MCF 10A (cell line): ENCODE measurements at regions of chr1 and their contacts with region 1.

Region 1: GRCh38 chr1:224052772-224053171 is 61.1 kb upstream of the FBXO28 start:
- DNase-seq: peak; percentile 39
- H3K4me3 Mint-ChIP-seq: no peak overlapping the region
- H3K27ac Mint-ChIP-seq: no peak overlapping the region
- H3K4me1 Mint-ChIP-seq: peaks cover 10% of the 10 kb centered on the region
- H3K27me3 Mint-ChIP-seq: no peaks in the 10 kb centered on the region
- CTCF ChIP-seq: no peak

Region 2: GRCh38 chr1:223390618-223391017 is 662.2 kb before region 1 on chr1:
- CTCF ChIA-PET with region 1: no interaction called
- POLR2A ChIA-PET with region 1: no interaction called
- intact Hi-C with region 1: no loop called
- DNase-seq: no peak
- H3K4me3 Mint-ChIP-seq: no peak overlapping the region
- H3K27ac Mint-ChIP-seq: no peak overlapping the region
- H3K4me1 Mint-ChIP-seq: no peaks in the 10 kb centered on the region
- H3K27me3 Mint-ChIP-seq: peaks cover 16% of the 10 kb centered on the region
- CTCF ChIP-seq: no peak

Region 3: DNA sequence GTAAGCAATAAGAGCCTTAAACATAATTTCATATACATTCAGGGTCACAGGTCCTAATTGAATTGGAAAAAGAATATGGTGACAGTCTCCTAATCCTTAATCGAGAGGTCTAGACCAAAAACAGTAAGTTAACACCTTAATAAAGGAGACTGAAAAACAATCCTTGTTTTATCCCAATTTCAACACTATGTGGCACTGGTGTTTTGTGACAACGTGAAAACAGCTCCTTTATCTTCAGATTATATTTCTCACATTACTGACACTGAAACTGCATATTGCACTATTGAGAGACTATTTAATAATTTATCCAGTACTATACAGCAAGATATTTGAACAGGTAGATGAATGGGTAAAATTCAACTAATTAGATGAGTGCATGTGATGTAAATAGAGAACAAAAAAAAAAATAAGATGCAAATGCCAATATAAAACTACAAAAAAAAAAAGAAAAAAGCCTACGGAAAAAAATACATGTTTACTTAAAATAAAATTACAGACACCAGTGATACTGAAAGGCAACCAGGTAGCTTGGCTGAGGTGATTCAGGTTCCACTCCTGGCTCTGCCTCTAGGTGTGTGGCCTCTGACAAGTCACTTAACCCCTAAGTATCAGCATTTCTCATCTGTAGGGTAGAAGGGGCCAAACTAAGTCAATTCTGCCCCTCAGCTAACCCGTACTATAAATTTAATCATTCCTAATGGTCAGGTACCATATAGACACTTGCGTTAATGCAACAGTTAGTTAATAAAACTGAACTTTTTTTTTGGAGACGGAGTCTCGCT is 240.9 kb before region 1 on chr1:
- CTCF ChIA-PET with region 1: interaction called, 27 read pairs
- POLR2A ChIA-PET with region 1: interaction called, 4 read pairs
- intact Hi-C with region 1: loop called (anchors 1 kb)
- DNase-seq: peak; percentile 74
- H3K4me3 Mint-ChIP-seq: no peak overlapping the region
- H3K27ac Mint-ChIP-seq: no peak overlapping the region
- H3K4me1 Mint-ChIP-seq: peaks cover 28% of the 10 kb centered on the region
- H3K27me3 Mint-ChIP-seq: no peaks in the 10 kb centered on the region
- CTCF ChIP-seq: peak; percentile 86

Region 4: DNA sequence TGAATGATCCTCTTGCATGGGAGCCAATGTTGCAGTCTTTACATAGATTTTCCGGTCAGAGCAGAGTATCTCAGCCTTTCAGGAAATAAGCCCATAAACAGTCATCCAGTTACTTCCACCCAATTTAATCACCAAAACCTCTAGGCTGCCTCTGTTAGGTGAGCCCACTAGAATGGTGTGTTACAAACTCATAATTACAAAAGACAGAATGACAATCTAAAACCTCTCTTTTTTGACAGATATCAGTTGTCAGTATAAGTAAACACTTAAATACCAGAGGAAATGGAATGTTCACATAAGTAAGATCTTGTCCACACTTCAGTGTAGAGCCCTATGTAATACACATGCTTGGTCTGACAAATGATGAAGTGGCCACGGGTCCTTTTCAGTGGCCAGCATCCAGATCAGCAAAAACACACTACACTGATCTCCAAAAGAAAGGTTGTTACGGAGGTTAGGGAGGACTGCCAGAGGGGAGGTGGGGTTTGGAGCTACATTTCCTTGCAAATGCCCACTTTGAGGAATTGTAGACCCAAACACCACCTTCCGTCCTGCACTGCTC is 10.1 kb before region 1 on chr1:
- CTCF ChIA-PET with region 1: interaction called, 25 read pairs
- POLR2A ChIA-PET with region 1: interaction called, 3 read pairs
- intact Hi-C with region 1: no loop called
- DNase-seq: no peak
- H3K4me3 Mint-ChIP-seq: no peak overlapping the region
- H3K27ac Mint-ChIP-seq: no peak overlapping the region
- H3K4me1 Mint-ChIP-seq: no peaks in the 10 kb centered on the region
- H3K27me3 Mint-ChIP-seq: peaks cover 11% of the 10 kb centered on the region
- CTCF ChIP-seq: no peak

Region 5: DNA sequence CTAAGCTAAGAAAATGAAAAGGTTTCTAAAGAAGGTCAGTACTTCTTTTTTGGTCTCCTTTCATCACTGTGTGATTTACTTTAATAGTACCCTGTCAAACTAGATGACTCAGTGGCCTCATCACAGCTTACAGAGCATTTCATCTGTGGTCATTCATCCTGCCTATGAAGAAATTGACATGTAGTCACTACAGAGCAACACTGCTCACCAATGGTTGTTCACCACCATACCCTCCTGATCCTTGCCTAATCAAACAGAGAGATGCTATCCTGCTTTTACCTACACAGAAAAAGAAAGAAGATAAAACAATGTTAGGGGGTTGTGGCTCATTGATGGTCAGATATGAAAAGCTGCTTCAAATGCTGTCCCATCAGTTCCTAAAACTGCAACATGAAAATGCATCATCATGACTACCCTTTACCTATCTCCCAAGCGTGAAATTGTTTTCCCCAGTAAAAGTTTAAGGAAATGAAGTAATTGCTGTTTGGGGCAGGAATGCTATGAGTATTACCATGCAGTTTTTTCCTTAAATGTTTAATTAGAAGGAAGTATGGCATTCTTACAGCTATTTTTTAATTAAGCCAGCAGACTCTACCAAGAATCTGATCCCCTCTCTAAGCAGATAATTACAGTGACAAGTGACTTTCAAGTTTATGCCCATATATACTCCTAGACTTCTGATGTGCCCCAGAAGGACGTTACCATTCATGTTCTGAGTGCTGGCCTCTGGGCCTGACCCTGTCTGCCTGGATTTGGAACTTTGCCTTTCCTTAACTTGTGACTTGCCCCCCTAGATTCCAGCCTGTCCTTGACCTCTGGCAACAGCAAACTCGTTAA is 15.1 kb after region 1 on chr1:
- CTCF ChIA-PET with region 1: interaction called, 64 read pairs
- POLR2A ChIA-PET with region 1: interaction called, 9 read pairs
- intact Hi-C with region 1: no loop called
- DNase-seq: peak; percentile 78
- H3K4me3 Mint-ChIP-seq: no peak overlapping the region
- H3K27ac Mint-ChIP-seq: no peak overlapping the region
- H3K4me1 Mint-ChIP-seq: peaks cover 17% of the 10 kb centered on the region
- H3K27me3 Mint-ChIP-seq: no peaks in the 10 kb centered on the region
- CTCF ChIP-seq: no peak

Region 6: DNA sequence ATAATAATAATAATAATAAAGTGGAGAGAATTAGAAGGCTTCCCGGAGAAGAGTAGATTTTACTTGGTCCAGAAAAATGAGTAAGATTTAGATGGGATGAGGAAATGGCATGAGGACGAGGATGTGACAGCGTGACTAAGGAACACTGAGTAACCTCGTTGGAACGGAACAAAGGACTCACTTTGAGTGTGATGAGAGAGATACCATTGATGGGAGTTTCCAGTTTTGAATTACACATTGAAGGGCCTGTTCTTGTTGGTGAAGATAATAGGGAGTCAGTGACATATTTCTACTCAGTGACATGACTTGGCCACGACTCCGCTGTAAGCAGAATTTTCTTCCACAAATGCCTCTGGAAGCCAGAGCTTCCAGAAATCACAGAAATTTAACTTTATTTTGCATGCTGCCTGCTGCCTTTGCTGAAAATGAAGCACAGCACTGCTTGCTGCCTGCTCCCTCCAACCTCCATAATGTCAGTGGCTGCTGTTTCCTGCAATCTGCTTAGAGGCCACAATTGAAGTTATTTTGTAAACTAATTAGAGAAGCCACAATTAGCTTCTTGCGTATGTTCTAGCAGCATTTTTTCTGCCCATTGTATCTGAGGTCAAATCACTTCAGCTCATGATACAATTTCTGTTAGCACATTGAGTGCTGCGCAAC is 27.5 kb after region 1 on chr1:
- CTCF ChIA-PET with region 1: interaction called, 12 read pairs
- POLR2A ChIA-PET with region 1: interaction called, 3 read pairs
- intact Hi-C with region 1: no loop called
- DNase-seq: peak; percentile 55
- H3K4me3 Mint-ChIP-seq: no peak overlapping the region
- H3K27ac Mint-ChIP-seq: no peak overlapping the region
- H3K4me1 Mint-ChIP-seq: no peaks in the 10 kb centered on the region
- H3K27me3 Mint-ChIP-seq: no peaks in the 10 kb centered on the region
- CTCF ChIP-seq: no peak

Region 7: GRCh38 chr1:224106568-224107281 is 54.0 kb after region 1 on chr1:
- CTCF ChIA-PET with region 1: interaction called, 38 read pairs
- POLR2A ChIA-PET with region 1: interaction called, 3 read pairs
- intact Hi-C with region 1: no loop called
- DNase-seq: peak; percentile 78
- H3K4me3 Mint-ChIP-seq: peak overlapping the region; percentile 35
- H3K27ac Mint-ChIP-seq: peak overlapping the region; percentile 29
- H3K4me1 Mint-ChIP-seq: peaks cover 7% of the 10 kb centered on the region
- H3K27me3 Mint-ChIP-seq: no peaks in the 10 kb centered on the region
- CTCF ChIP-seq: peak; percentile 55

Region 8: DNA sequence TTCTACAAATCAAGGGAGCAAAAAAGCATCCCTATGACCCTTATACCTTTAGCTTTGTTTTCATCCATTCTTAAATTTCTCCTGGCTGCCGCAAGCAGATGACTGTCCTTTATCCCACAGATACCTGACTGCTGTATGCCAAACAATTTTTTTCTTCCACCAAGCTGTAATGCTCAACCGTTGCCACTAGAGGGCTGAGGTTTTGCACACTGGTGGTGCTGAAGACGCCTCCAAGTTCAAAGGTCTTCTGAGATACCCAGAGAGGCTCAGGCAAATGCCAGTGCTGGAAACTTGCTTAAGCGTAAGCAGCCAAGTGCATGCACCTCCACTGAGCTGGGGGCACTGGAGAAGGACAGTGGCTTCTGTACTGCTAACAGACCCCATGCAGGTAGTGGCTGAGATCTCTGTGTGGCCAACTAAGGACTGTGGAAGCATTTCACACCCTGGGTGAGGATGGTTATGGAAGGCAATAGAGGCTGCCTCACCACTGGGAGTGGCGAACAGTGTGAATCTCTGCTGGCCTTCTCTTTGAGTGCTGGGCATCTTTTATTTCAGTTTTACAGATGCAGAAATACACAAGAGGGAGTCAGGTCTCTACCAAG is 591.9 kb after region 1 on chr1:
- CTCF ChIA-PET with region 1: no interaction called
- POLR2A ChIA-PET with region 1: no interaction called
- intact Hi-C with region 1: no loop called
- DNase-seq: peak; percentile 83
- H3K4me3 Mint-ChIP-seq: no peak overlapping the region
- H3K27ac Mint-ChIP-seq: no peak overlapping the region
- H3K4me1 Mint-ChIP-seq: no peaks in the 10 kb centered on the region
- H3K27me3 Mint-ChIP-seq: peaks cover 21% of the 10 kb centered on the region
- CTCF ChIP-seq: peak; percentile 97